ENCODE measurements at regions of chr13 and their contacts with region 1.

Region 1: GRCh38 chr13:102913914-102914313 is 68.1 kb downstream of the ERCC5 start:
- DNase-seq: no peak
- ATAC-seq: no peak
- H3K4me3 ChIP-seq: no peak overlapping the region
- H3K27ac ChIP-seq: no peak overlapping the region
- H3K4me1 ChIP-seq: no peaks in the 10 kb centered on the region
- H3K27me3 ChIP-seq: no peaks in the 10 kb centered on the region
- CTCF ChIP-seq: no peak
- POLR2A ChIP-seq: no peak
- RAD21 ChIP-seq: no peak

Region 2: GRCh38 chr13:103078145-103078544 is 164.2 kb after region 1 on chr13:
- CTCF ChIA-PET with region 1: no interaction called
- POLR2A ChIA-PET with region 1: no interaction called
- RAD21 ChIA-PET with region 1: no interaction called
- intact Hi-C with region 1: no loop called
- DNase-seq: no peak
- ATAC-seq: no peak
- H3K4me3 ChIP-seq: no peak overlapping the region
- H3K27ac ChIP-seq: no peak overlapping the region
- H3K4me1 ChIP-seq: no peaks in the 10 kb centered on the region
- H3K27me3 ChIP-seq: no peaks in the 10 kb centered on the region
- CTCF ChIP-seq: no peak
- POLR2A ChIP-seq: no peak
- RAD21 ChIP-seq: no peak

Region 3: GRCh38 chr13:103140001-103140671 is 226.2 kb after region 1 on chr13:
- CTCF ChIA-PET with region 1: interaction called, 8 read pairs
- POLR2A ChIA-PET with region 1: no interaction called
- RAD21 ChIA-PET with region 1: no interaction called
- intact Hi-C with region 1: loop called (anchors 1 kb)
- DNase-seq: peak; percentile 16
- ATAC-seq: peak; percentile 73
- H3K4me3 ChIP-seq: no peak overlapping the region
- H3K27ac ChIP-seq: no peak overlapping the region
- H3K4me1 ChIP-seq: no peaks in the 10 kb centered on the region
- H3K27me3 ChIP-seq: no peaks in the 10 kb centered on the region
- CTCF ChIP-seq: peak; percentile 25 to 62 (median 33); a peak in 5 of 6 replicates
- POLR2A ChIP-seq: no peak
- RAD21 ChIP-seq: peak; percentile 54

Region 4: DNA sequence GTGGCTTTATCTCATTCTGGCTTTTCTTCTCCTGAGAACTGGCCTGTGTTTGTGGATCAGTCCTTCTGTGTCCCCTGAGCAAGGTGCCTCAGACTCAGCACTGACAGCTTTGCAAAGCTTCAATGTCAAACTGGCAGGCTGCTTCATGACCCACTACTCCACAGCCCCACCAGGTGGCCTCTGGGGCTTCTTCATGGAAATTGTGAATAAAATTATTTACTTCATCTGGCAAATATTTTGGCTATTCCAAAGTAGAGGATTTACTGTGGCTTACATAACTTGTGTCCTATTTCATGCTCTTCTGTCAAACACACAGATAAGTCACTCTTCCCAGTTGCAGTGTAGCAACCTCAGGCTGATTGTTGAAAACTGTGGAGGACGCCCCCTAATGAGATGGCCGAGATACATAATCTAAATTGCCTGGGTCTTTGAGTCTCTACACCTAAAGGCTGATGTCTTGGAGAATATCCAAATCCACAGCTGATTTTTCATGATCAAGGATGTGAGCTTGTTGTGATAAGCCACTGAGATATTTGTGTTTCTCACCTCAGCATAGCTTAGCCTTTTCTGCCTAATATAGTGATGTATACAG is 874.2 kb after region 1 on chr13:
- CTCF ChIA-PET with region 1: no interaction called
- POLR2A ChIA-PET with region 1: no interaction called
- RAD21 ChIA-PET with region 1: no interaction called
- intact Hi-C with region 1: loop called (anchors 10 kb)
- DNase-seq: no peak
- ATAC-seq: peak; percentile 57; the same call in 1 of the 2 replicates
- H3K4me3 ChIP-seq: no peak overlapping the region
- H3K27ac ChIP-seq: no peak overlapping the region
- H3K4me1 ChIP-seq: no peaks in the 10 kb centered on the region
- H3K27me3 ChIP-seq: no peaks in the 10 kb centered on the region
- CTCF ChIP-seq: peak; percentile 47 to 55 (median 52)
- POLR2A ChIP-seq: no peak
- RAD21 ChIP-seq: peak; percentile 26; the same call in 1 of the 2 replicates